ENCODE measurements at regions of chr1 and their contacts with region 1.

Region 1: GRCh38 chr1:107782217-107782845 is 182.6 kb downstream of the VAV3 start:
- DNase-seq: peak; percentile 17 to 46 (median 28)
- ATAC-seq: peak; percentile 63
- H3K4me3 ChIP-seq: no peak overlapping the region
- H3K27ac ChIP-seq: no peak overlapping the region
- H3K4me1 ChIP-seq: no peaks in the 10 kb centered on the region
- H3K27me3 ChIP-seq: no peaks in the 10 kb centered on the region
- CTCF ChIP-seq: peak; percentile 31 to 73 (median 68)
- POLR2A ChIP-seq: no peak

Region 2: DNA sequence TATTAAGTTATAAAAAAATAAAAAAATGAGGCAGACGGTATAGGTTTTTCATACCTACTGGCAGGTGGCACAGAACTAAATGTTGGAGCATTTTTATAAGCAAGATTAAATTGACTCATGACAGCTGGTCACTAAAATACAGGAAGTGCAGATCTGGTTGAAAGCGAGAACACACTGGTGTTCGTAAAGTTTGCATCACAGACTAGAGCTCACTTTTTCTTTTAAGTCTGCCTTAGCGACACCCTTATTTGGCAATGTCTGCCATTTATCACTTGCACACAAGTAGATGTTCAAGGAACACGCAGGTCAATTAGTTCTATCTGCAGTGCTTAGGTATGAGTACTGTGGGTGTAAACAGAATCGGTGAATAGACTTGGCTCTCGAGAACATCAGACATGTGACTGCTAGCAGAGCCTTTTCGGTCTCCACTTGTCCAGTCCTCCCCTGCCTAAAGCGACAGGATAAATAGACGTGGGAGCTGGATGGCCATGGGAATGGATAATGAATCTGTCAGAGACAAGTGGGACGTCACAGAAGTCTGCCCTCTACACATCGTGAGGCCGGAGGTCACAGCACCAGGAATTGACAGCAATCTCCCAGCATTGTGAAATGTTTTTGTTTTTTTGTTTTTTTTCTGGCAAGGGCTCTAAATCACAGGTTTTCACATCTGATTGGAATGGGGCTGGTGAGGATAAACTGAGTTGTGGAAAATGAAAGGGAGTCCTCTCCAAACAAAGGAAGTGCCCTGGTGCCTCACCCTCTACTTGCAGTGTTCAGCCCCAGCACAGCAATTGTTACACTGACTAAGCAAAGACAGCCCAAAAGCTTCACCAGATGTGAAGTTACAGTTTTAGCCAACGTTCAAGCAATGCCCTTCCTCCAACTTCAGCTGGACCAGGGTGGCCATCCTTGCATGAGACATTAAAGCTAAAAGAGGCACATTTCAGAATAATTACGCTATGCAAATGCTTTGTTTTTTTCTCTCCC is 392.6 kb before region 1 on chr1:
- intact Hi-C with region 1: no loop called
- DNase-seq: no peak
- ATAC-seq: no peak
- H3K4me3 ChIP-seq: no peak overlapping the region
- H3K27ac ChIP-seq: no peak overlapping the region
- H3K4me1 ChIP-seq: no peaks in the 10 kb centered on the region
- H3K27me3 ChIP-seq: no peaks in the 10 kb centered on the region
- CTCF ChIP-seq: no peak
- POLR2A ChIP-seq: no peak

Region 3: DNA sequence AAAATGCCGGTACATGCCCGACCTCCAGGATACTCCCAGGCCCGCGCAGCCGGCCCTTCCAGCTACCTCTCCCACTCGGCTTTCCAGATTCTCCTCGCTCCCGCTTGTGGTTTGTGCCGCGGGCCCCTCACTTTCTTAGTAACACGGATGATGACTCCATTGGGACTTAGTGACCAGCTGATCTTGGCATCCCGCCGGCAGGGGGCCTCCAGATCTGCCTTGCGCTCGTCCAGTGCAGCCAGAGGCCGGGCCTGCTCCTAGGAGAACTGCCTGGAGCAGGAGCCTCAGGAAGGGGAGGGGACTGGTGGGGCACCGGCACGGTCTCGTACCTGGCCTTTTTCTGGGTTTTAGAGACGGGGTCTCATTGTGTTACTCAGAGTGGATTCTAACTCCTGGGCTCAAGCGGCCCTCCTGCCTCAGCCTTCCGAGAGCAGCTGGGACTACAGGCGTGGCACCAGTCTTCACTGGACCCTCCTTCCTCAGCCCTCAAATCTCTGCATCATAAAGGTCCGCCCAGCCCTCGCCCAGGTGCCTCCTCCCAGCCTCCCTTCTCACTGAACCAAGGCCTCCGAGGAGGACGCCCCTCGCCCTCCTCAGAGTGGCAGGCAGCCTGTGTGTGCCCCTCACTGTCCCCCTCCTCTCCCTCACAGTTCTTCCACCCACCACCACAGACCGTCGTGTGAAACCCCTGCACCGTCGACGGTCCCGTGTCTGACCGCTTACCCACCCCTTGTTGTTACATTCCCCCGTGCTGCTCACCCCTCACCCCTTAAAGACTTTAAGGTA is 339.2 kb after region 1 on chr1:
- intact Hi-C with region 1: loop called (anchors 5 kb)
- DNase-seq: peak in 1 of 4 donors; percentile 22
- ATAC-seq: no peak
- H3K4me3 ChIP-seq: no peak overlapping the region
- H3K27ac ChIP-seq: no peak overlapping the region
- H3K4me1 ChIP-seq: no peaks in the 10 kb centered on the region
- H3K27me3 ChIP-seq: no peaks in the 10 kb centered on the region
- CTCF ChIP-seq: no peak
- POLR2A ChIP-seq: no peak

Measured in body of pancreas (tissue), 4 donors.